ENCODE measurements at regions of chr10 and their contacts with region 1.

Region 1: DNA sequence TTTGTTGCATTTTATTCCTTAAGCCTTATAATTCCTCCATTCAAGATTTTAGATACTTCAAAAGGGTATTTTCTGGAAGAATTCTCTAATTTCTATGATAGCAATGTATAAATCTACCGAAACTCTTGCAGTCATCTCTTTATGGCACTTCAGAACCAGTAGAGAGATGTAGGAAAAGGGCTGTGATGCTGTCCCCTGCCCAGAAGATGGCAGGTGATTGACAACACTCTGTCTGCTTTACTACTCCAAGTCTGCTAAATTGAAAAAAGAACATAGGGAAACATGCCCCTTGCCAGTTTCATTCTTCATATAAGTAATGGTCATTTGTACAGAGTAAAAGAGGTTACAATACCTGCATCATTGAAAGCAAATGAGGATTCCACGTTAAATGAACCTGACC is 5.1 kb downstream of the TCTN3 start:
- DNase-seq: no peak
- ATAC-seq: no peak
- H3K4me3 ChIP-seq: no peak overlapping the region
- H3K27ac ChIP-seq: no peak overlapping the region
- H3K4me1 ChIP-seq: peaks cover 6 to 26% (median 17%) of the 10 kb centered on the region in 9 donors
- H3K27me3 ChIP-seq: no peaks in the 10 kb centered on the region
- CTCF ChIP-seq: no peak

Region 2: DNA sequence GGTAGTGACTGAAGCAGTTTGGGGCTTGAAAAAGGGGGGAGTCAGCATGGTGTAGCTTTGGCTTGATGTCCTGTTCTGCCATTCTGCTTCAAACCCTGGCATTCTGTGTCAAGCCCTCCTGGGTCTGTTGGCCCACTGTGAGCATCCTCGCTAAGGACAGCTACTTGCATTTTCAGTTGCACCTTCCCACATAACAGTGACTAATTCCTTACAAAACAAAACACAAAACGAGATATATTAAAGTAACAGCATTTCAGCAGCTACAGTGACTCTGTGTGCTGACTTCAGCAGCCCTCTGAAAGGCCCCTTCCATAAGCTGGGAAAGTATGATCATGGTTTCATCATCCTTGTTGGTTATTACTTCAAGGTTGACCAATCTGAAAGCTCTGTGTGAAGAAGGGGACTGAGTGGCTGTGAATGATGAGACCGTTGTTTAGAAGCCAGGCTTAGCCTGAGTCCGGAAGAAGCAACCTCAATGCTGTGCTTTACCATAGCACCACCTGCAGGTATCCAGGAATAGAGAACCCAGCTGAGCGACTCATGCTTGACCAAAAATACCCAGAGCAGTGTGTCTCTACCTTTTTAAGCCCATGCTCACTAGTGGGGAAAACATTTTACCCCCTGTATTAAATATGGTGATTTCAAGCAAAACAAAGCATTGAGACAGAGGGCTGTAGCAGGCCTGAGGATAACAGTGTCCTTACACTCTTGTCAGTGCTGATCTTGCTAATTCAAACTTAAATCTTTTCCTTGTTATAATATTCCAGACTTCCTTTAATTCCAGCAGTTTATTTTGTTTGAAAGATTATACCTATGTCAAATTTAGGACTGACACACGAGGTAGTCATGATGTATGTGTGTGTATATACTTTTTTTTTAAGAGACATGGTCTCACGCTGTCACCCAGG is 176.5 kb after region 1 on chr10:
- intact Hi-C with region 1: loop called in 5 of 10 experiments (anchors 5 kb)
- DNase-seq: peak in 1 of 2 donors; percentile 36
- ATAC-seq: peak; percentile 70 to 89 (median 86)
- H3K4me3 ChIP-seq: no peak overlapping the region
- H3K27ac ChIP-seq: peak overlapping the region in 1 of 10 donors; percentile 6
- H3K4me1 ChIP-seq: peaks cover 0 to 6% (median 0%) of the 10 kb centered on the region in 9 donors
- H3K27me3 ChIP-seq: no peaks in the 10 kb centered on the region
- CTCF ChIP-seq: peak; percentile 18 to 75 (median 65)

Measured in heart right ventricle (tissue), 16 donors.